ENCODE measurements at regions of chr2 and their contacts with region 1.

Region 1: DNA sequence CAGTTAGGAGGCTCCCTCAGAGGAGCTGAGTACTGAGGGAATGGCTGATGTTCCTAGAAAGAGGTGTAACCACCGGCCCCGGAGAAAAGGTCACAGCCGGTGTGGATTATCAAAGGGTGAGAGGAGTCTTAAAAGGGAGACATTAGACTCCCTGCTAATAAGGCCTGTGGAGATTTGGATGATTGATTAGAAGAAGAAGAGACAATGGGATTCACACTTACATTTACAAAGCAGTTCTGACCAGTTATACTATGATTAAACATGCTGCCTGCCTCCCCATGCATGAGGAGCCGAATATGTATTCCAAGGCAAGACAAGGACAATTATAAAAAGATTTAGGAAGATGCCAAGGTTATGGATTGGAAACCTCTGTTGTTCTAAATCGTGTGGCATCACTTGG is 302.4 kb downstream of the SLC4A3 start:
- DNase-seq: no peak
- H3K4me3 ChIP-seq: no peak overlapping the region
- H3K27ac ChIP-seq: no peak overlapping the region
- H3K4me1 ChIP-seq: no peaks in the 10 kb centered on the region
- H3K27me3 ChIP-seq: no peaks in the 10 kb centered on the region
- CTCF ChIP-seq: no peak

Region 2: DNA sequence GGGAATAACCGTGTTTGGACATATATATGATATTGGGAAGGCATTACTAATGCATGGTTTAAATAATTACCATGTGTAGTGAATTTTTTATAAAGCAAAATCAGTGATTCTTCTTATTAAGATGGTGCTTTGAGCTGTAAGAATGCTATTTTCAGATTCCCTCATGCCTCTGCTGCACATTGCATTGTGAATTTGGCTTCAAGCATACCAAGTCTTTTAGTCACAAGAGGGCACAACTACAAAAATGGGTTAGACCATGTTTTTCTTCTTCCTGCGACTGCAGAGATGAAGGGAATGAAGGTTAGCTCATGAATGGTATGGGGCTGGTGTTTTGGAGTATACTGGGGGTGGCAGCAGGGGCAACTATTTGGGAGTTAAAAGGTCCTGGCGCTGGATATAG is 17.7 kb after region 1 on chr2:
- CTCF ChIA-PET with region 1: no interaction called
- dilution Hi-C with region 1: no loop called
- in situ Hi-C with region 1: no loop called
- intact Hi-C with region 1: no loop called
- DNase-seq: no peak
- H3K4me3 ChIP-seq: no peak overlapping the region
- H3K27ac ChIP-seq: no peak overlapping the region
- H3K4me1 ChIP-seq: no peaks in the 10 kb centered on the region
- H3K27me3 ChIP-seq: no peaks in the 10 kb centered on the region
- CTCF ChIP-seq: no peak

Region 3: DNA sequence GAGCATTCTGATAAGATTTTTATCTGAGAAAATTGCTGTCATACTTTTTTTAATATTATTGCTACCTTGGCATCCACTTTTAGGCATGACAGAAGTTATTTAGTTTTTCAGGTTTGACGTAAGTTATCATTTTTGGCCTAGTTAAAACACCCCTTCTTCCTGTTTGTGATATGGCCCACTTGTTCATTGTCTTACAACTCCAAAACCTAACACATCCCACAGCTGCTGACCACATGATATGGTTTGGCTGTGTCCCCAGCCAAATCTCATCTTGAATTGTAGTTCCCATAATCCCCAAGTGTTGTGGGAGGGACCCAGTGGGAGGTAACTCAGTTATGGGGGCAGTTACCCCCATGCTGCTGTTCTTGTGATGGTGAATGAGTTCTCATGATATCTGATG is 85.7 kb after region 1 on chr2:
- CTCF ChIA-PET with region 1: no interaction called
- dilution Hi-C with region 1: no loop called
- in situ Hi-C with region 1: no loop called
- intact Hi-C with region 1: no loop called
- DNase-seq: no peak
- H3K4me3 ChIP-seq: no peak overlapping the region
- H3K27ac ChIP-seq: no peak overlapping the region
- H3K4me1 ChIP-seq: no peaks in the 10 kb centered on the region
- H3K27me3 ChIP-seq: no peaks in the 10 kb centered on the region
- CTCF ChIP-seq: no peak

Region 4: DNA sequence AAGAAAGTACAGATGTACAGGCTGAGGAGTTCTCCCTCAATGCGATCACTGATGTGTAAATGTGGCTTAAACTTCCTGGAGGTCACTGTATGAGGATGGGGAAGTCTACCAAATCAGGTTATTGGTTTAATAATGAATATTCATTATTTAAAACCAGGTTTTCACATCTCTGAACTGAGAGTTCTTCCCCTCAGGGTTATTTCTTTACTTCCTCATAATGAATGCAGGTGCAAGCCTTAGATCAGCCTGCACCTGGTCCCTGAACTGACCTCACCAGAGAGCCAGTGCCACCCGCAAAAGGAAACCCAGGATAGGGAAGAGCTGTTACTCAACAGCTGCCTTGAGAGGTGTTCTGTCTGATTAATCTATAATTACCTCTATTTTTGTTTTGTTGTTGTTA is 1273.3 kb after region 1 on chr2:
- CTCF ChIA-PET with region 1: interaction called, 24 read pairs
- dilution Hi-C with region 1: no loop called
- in situ Hi-C with region 1: no loop called
- intact Hi-C with region 1: no loop called
- DNase-seq: no peak
- H3K4me3 ChIP-seq: no peak overlapping the region
- H3K27ac ChIP-seq: no peak overlapping the region
- H3K4me1 ChIP-seq: no peaks in the 10 kb centered on the region
- H3K27me3 ChIP-seq: no peaks in the 10 kb centered on the region
- CTCF ChIP-seq: no peak